ENCODE measurements at regions of chr4 and their contacts with region 1.

Region 1: DNA sequence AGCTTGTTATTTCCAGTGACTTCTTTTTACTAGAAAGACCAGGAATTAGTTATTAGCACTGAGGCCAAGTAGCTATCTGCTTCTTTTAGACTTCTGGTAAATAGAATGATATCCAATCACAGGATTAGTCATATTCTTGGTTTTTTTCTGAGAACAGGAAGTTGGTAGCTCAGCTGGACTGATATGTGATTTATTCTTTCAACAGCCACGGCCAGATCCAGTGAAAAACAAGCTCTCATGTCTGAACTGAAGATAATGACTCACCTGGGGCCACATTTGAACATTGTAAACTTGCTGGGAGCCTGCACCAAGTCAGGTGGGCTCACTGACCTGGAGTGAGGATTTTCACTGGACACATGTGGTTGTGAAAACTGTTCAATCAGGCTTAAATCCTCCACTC is 48.6 kb downstream of the PDGFRA start:
- DNase-seq: peak; percentile 11 to 81
- H3K4me3 ChIP-seq: no peak overlapping the region
- H3K27ac ChIP-seq: peak overlapping the region; percentile 80 to 81
- H3K4me1 ChIP-seq: peaks cover 14 to 55% of the 10 kb centered on the region in 2 donors
- H3K27me3 ChIP-seq: no peaks in the 10 kb centered on the region
- CTCF ChIP-seq: no peak

Region 2: DNA sequence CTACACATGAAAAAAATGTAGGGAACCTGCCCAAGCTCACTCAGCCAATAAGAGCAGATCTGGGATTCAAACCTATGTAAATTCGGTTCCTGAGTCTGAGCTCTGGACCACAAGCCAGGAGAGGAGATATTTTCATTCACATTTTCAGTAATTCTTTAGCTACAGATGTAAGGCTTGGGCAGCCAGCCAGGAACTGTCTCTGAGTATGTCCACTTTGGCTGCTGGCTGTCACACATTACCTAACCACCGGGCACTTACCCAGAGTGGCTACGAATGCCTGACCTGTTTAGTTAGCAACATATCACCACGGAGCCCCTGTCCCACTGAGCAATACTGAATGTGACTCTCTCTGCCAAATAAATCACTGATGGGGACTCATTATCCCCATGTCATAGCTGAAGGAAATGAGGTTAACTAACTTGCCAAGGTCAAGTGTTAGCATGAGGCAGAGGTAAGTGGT is 1633.9 kb before region 1 on chr4:
- intact Hi-C with region 1: loop called (anchors 10 kb)
- DNase-seq: peak; percentile 43 to 92
- H3K4me3 ChIP-seq: no peak overlapping the region
- H3K27ac ChIP-seq: peak overlapping the region; percentile 64 to 73
- H3K4me1 ChIP-seq: peaks cover 0 to 41% of the 10 kb centered on the region in 2 donors
- H3K27me3 ChIP-seq: no peaks in the 10 kb centered on the region
- CTCF ChIP-seq: no peak

Region 3: GRCh38 chr4:54296548-54297203 is 19.0 kb after region 1 on chr4:
- intact Hi-C with region 1: loop called (anchors 1 kb)
- DNase-seq: peak in 1 of 2 donors; percentile 75
- H3K4me3 ChIP-seq: peak overlapping the region; percentile 11 to 22
- H3K27ac ChIP-seq: peak overlapping the region; percentile 77 to 84
- H3K4me1 ChIP-seq: peaks cover 3 to 26% of the 10 kb centered on the region in 2 donors
- H3K27me3 ChIP-seq: no peaks in the 10 kb centered on the region
- CTCF ChIP-seq: no peak

Region 4: DNA sequence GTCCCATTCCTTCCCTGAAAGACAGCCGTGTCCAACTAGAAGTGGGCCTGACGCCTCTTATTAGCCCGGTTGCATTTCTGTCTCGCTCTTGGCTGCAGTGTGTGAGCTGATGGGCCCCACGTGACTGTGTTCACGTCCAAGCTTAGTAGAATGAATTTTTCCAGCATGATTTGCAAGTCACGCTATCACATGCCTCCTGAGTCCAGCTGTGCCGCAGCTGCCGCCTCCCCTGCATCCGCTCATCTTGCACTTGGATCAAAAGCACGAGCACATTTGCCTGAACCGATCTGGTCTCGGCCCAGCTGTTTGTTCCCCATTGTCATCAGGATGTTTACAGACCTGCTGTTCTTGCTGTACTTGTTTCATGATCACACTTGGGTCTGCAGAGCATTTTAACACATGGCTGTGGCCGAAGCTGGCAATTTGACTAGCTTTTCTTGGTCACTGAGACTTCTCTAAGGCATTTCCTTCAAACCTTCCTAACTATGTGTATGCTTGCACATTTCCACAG is 506.5 kb after region 1 on chr4:
- intact Hi-C with region 1: loop called (anchors 10 kb)
- DNase-seq: peak; percentile 76 to 95
- H3K4me3 ChIP-seq: peak overlapping the region in 1 of 2 donors; percentile 37
- H3K27ac ChIP-seq: peak overlapping the region; percentile 77 to 83
- H3K4me1 ChIP-seq: peaks cover 0 to 26% of the 10 kb centered on the region in 2 donors
- H3K27me3 ChIP-seq: no peaks in the 10 kb centered on the region
- CTCF ChIP-seq: no peak

Measured in ascending aorta (tissue), 2 donors.